GM13976 (cell line): ENCODE measurements at regions of chr7 and their contacts with region 1.

Region 1: DNA sequence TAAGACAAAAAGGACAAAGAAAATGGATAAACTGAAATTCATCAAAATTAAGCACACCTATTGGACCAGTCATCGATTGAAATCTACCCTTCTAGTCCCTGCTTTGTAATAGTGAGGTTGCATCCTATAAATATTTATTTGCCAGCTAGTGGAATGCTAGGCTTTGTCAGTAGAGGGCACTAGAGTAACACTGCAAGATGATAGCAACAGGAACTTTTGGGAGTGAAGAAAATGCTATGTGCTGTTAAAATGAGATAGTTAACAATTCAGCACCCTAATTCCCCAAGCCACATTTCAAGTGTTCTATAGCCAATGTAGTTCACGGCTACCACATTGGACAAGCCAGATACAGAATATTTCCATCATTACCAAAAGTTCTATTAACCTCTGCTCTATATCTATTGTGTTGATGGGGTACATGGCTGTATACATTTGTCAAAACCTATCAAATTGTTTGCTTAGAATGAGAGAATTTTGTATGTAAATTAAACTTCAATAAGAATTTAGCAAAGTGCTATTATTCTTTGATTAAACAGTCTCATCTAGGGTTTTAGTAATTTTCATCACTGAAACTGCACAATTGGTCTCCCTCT is 69.8 kb downstream of the LSMEM1 start:
- DNase-seq: peak; percentile 66
- CTCF ChIP-seq: peak; percentile 76

Region 2: GRCh38 chr7:112898432-112899290 is 348.1 kb after region 1 on chr7:
- in situ Hi-C with region 1: loop called (anchors 25 kb)
- DNase-seq: peak; percentile 44
- CTCF ChIP-seq: peak; percentile 59